MCF 10A (cell line): ENCODE measurements at regions of chr17 and their contacts with region 1.

Region 1: GRCh38 chr17:7261172-7261927 is 928 bp downstream of the CLDN7 start:
- DNase-seq: peak; percentile 87
- H3K4me3 Mint-ChIP-seq: peak overlapping the region; percentile 73
- H3K27ac Mint-ChIP-seq: peak overlapping the region; percentile 79
- H3K4me1 Mint-ChIP-seq: peaks cover 36% of the 10 kb centered on the region
- H3K27me3 Mint-ChIP-seq: no peaks in the 10 kb centered on the region
- CTCF ChIP-seq: no peak

Region 2: DNA sequence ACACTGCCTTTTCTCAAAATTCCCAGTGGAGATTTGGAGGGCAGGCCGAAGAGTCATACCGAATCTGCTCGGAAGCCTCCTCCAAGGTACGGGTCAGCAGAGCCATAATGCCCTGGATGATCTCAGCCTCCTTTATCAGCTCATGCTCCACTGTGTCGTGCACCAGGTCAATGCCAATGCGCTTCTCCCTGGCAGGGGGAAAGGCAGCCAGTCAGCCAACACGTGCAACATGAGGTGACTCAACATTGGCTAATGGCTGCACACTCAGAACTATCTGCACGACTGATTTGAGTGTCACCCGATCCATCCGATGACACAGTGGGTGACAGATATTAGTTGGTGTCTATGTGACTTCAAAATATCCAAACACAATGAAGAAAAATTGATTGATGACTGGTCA is 445.6 kb before region 1 on chr17:
- CTCF ChIA-PET with region 1: no interaction called
- POLR2A ChIA-PET with region 1: no interaction called
- intact Hi-C with region 1: no loop called
- DNase-seq: no peak
- H3K4me3 Mint-ChIP-seq: no peak overlapping the region
- H3K27ac Mint-ChIP-seq: no peak overlapping the region
- H3K4me1 Mint-ChIP-seq: no peaks in the 10 kb centered on the region
- H3K27me3 Mint-ChIP-seq: no peaks in the 10 kb centered on the region
- CTCF ChIP-seq: no peak

Region 3: GRCh38 chr17:7280519-7281429 is 19.4 kb after region 1 on chr17:
- CTCF ChIA-PET with region 1: interaction called, 7 read pairs
- POLR2A ChIA-PET with region 1: interaction called, 14 read pairs
- intact Hi-C with region 1: no loop called
- DNase-seq: peak; percentile 88
- H3K4me3 Mint-ChIP-seq: peak overlapping the region; percentile 72
- H3K27ac Mint-ChIP-seq: no peak overlapping the region
- H3K4me1 Mint-ChIP-seq: peaks cover 6% of the 10 kb centered on the region
- H3K27me3 Mint-ChIP-seq: no peaks in the 10 kb centered on the region
- CTCF ChIP-seq: peak; percentile 96